AG04449 (cell line): ENCODE measurements at regions of chr6 and their contacts with region 1.

Region 1: DNA sequence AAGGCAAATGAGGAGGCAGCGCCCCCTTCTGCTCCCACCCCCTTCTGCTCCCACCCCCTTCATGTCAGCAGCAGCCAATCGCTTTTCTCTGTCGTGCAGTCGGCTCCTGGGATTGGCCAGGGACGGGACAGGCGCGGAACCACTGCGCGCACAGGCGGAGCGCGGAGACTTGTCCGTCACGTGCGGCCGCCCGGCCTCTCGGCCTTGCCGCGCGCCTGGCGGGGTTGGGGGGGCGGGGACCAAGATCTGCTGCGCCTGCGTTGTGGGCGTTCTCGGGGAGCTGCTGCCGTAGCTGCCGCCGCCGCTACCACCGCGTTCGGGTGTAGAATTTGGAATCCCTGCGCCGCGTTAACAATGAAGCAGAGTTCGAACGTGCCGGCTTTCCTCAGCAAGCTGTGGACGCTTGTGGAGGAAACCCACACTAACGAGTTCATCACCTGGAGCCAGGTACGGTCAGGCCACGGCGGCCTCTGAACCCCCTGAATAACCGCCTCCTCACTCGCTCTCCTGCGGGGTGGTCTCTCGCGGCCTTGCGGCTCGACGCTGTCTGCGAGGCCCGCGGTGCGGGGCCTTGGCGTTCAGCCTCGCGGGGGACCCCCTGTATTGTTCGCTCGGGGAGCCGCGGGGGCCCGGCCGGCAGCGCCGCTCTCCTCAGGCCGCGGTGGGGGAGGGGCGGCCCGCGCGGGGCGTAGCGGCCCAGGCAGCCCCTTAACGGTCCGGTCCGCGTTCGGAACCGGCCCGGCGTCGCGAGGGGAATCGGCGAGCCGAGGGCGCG is at the start of gene HSF2:
- DNase-seq: no peak
- H3K4me3 ChIP-seq: peak within 1 kb of the TSS; percentile 92
- CTCF ChIP-seq: peak; percentile 20

Region 2: DNA sequence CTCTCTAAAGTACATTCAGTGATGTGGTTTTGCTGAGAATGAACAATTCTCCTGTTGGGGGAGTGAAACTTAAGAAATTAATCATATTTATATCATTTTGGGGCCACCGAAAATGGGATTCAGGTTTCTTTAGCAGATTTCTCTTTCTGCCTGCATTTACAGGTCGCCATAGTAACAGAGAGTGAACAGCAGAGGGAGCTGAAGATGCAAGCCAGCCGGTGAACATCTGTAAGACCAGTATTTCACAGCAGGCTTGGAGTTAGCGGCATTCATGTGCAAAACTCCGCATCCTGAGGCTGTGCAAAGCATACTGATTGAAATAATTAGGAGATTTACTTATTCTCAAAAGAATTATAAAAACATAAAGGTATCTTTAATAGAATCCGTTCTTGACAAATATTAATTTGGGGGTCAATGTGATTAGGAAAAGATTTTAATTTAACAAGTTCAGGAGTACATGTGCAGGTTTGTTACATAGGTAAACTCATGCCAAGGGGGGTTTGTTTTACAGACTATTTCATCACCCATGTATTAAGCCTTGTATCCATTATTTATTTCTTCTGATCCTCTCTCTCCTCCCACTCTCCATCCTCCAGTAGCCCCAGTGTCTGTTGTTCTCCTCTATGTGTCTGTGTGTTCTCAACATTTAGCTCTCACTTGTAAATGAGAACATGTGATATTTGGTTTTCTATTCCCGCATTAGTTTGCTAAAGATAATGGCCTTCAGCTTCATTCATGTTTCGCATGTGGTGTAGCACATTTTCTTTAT is 17.9 kb before region 1 on chr6:
- CTCF ChIA-PET with region 1: interaction called, 14 read pairs
- POLR2A ChIA-PET with region 1: no interaction called
- DNase-seq: peak; percentile 31
- H3K4me3 ChIP-seq: no peak overlapping the region
- CTCF ChIP-seq: peak; percentile 80